ENCODE measurements at regions of chr5 and their contacts with region 1.

Region 1: DNA sequence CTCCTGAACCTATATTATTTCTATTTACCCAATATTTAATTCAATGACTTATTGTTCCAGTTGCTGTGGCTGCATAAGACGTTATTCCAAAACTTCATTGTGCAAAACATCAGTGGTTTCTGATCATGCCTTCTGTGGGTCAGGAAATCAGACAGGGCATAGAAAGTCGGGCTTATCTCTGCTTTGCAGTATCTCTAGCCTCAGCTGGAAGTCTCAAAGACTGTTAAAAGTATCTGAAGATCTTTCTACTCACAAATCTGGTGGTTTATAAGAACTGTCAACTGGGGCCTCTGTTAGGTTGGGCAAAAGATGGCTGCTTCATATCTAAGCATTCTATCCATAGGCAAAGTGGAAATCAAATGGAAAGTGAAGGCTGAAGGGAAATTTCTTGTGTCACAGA is 687.7 kb upstream of the ARRDC3 start:
- DNase-seq: no peak
- ATAC-seq: no peak

Region 2: DNA sequence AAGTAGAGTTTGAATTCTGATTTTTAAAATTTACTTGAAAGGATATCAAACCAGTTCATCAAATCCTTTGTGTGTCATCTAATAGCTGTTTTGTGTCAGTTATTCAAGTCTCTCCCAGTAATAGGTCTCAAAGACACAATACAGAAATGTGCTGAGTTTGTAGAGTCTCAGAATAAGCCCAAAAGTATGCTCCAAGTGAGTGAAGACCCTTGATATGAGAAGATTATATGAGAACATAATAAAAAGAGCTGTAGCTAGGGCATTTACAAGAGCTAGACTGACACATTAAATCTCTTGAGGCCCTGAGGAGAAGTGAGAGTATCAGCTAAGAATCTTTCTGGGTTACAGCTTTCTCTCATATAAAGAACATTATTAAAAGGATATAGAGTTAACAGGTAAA is 33.3 kb after region 1 on chr5:
- intact Hi-C with region 1: no loop called
- DNase-seq: no peak
- ATAC-seq: no peak

Region 3: DNA sequence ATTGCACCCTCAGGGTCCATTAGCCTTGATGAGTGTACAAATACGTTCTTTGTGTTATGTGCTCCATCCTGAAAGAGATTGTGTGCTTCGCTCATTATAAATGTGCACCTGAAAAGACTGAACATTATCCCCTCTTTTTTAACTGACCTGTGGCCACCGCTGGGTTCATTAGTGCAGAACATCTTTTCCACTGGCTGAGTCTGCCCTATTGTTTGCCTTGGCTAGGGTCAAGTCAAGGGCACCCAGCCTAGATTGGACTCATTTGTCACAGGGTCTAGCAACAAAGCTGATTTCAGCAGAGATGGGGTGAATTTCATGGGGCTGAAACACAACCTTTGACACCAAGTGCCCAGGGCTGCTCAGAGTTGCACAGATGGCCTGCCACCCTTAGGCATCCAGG is 76.5 kb after region 1 on chr5:
- intact Hi-C with region 1: loop called in 1 of 2 experiments (anchors 10 kb)
- DNase-seq: no peak
- ATAC-seq: no peak

Region 4: DNA sequence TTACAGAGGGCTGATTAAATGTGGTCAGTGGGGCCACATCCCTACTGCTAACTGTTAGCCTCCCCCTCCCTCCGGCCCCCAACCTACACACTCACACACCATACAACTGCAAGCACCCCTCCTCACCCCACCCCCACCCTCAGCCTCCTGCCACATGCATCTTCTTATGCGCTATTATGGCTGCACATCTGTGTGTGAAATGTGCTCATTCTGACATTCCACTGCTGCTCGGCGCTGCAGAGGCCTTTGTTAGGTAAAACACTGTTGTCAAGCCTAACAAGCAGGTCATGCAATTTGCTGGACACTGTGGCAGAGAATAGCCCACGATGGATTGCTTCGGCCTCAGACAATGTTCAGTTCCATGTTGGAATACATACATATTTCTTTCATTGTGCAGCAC is 1336.7 kb after region 1 on chr5:
- intact Hi-C with region 1: no loop called
- DNase-seq: no peak
- ATAC-seq: no peak